ENCODE measurements at regions of chr11 and their contacts with region 1.

Region 1: GRCh38 chr11:8775332-8775731 is 92.7 kb downstream of the RPL27A start:
- DNase-seq: peak in 1 of 2 experiments; percentile 32
- H3K4me3 ChIP-seq: no peak overlapping the region
- H3K4me3 Mint-ChIP-seq: no peak overlapping the region
- H3K27ac Mint-ChIP-seq: peak overlapping the region; percentile 67
- H3K4me1 ChIP-seq: peaks cover 25% of the 10 kb centered on the region
- H3K4me1 Mint-ChIP-seq: peaks cover 23% of the 10 kb centered on the region
- H3K27me3 ChIP-seq: no peaks in the 10 kb centered on the region
- H3K27me3 Mint-ChIP-seq: no peaks in the 10 kb centered on the region
- CTCF ChIP-seq: no peak

Region 2: GRCh38 chr11:8754241-8754640 is 21.1 kb before region 1 on chr11:
- CTCF ChIA-PET with region 1: no interaction called
- POLR2A ChIA-PET with region 1: no interaction called
- intact Hi-C with region 1: no loop called
- DNase-seq: no peak
- H3K4me3 ChIP-seq: no peak overlapping the region
- H3K4me3 Mint-ChIP-seq: no peak overlapping the region
- H3K27ac Mint-ChIP-seq: no peak overlapping the region
- H3K4me1 ChIP-seq: peaks cover 33% of the 10 kb centered on the region
- H3K4me1 Mint-ChIP-seq: peaks cover 17% of the 10 kb centered on the region
- H3K27me3 ChIP-seq: no peaks in the 10 kb centered on the region
- H3K27me3 Mint-ChIP-seq: no peaks in the 10 kb centered on the region
- CTCF ChIP-seq: no peak

Region 3: DNA sequence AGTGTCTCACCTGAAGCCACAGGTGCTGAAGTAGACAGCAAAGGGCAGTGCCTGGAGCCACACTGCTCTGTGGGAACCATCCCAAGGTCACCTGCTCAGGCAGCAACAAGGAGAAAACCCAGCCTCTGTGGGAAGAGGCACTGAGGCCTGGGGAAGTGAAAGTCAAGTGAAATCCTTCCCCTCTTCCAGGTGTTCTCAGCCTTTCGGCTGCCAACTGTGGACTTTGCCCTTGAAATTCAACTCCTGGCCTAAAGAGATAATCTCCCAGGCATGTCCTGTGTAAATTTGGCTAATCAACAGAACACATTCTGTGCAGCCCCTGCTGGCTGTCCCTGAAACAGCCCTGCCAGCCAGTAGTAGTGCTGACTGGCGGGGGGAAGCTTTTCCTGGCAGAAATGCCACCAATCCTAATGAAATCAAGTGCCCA is 19.4 kb after region 1 on chr11:
- CTCF ChIA-PET with region 1: no interaction called
- POLR2A ChIA-PET with region 1: no interaction called
- intact Hi-C with region 1: loop called (anchors 2 kb)
- DNase-seq: peak; percentile 86 to 89
- H3K4me3 ChIP-seq: peak overlapping the region; percentile 33
- H3K4me3 Mint-ChIP-seq: peak overlapping the region; percentile 68
- H3K27ac Mint-ChIP-seq: peak overlapping the region; percentile 83
- H3K4me1 ChIP-seq: peaks cover 31% of the 10 kb centered on the region
- H3K4me1 Mint-ChIP-seq: peaks cover 38% of the 10 kb centered on the region
- H3K27me3 ChIP-seq: no peaks in the 10 kb centered on the region
- H3K27me3 Mint-ChIP-seq: no peaks in the 10 kb centered on the region
- CTCF ChIP-seq: peak; percentile 82 to 94

Region 4: DNA sequence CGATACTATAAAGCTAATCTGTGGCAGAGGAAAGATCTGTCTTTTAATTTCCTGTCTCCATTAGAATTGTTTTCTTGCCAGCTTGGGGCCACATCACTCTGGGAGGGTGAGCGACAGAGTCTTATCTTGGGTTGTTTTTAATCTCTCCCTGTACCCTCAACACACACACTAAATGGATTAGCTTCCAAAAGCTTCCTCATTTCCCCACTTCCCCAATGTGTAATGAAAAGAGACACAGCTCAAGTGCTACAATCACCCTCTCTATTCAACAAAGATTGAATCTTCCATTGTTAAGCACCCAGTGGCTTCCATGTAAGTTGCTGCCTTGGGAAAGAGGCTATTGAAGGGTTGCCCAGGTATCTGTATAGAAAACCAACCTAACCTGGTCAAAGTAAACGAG is 173.6 kb after region 1 on chr11:
- CTCF ChIA-PET with region 1: no interaction called
- POLR2A ChIA-PET with region 1: no interaction called
- intact Hi-C with region 1: no loop called
- DNase-seq: no peak
- H3K4me3 ChIP-seq: no peak overlapping the region
- H3K4me3 Mint-ChIP-seq: no peak overlapping the region
- H3K27ac Mint-ChIP-seq: no peak overlapping the region
- H3K4me1 ChIP-seq: no peaks in the 10 kb centered on the region
- H3K4me1 Mint-ChIP-seq: no peaks in the 10 kb centered on the region
- H3K27me3 ChIP-seq: no peaks in the 10 kb centered on the region
- H3K27me3 Mint-ChIP-seq: no peaks in the 10 kb centered on the region
- CTCF ChIP-seq: no peak